Breast epithelium (tissue), 4 donors: ENCODE measurements at regions of chr13 and their contacts with region 1.

Region 1: GRCh38 chr13:64709079-64709478 is 2521.1 kb downstream of the PCDH9 start:
- DNase-seq: no peak
- H3K4me3 ChIP-seq: no peak overlapping the region
- H3K27ac ChIP-seq: no peak overlapping the region
- H3K4me1 ChIP-seq: no peaks in the 10 kb centered on the region
- H3K27me3 ChIP-seq: no peaks in the 10 kb centered on the region
- CTCF ChIP-seq: no peak
- POLR2A ChIP-seq: no peak

Region 2: GRCh38 chr13:64223048-64223447 is 486.0 kb before region 1 on chr13:
- intact Hi-C with region 1: loop called (anchors 5 kb)
- DNase-seq: no peak
- H3K4me3 ChIP-seq: no peak overlapping the region
- H3K27ac ChIP-seq: no peak overlapping the region
- H3K4me1 ChIP-seq: no peaks in the 10 kb centered on the region
- H3K27me3 ChIP-seq: no peaks in the 10 kb centered on the region
- CTCF ChIP-seq: no peak
- POLR2A ChIP-seq: no peak